ENCODE measurements at regions of chr2 and their contacts with region 1.

Region 1: GRCh38 chr2:24827321-24828237 is 34.4 kb downstream of the CENPO start:
- DNase-seq: peak; percentile 63 to 89
- ATAC-seq: peak; percentile 90 to 94 (median 92)
- H3K4me3 ChIP-seq: no peak overlapping the region
- H3K4me3 Mint-ChIP-seq: no peak overlapping the region
- H3K27ac ChIP-seq: no peak overlapping the region
- H3K27ac Mint-ChIP-seq: peak overlapping the region; percentile 48 to 66
- H3K4me1 ChIP-seq: peaks cover 15% of the 10 kb centered on the region
- H3K4me1 Mint-ChIP-seq: peaks cover 24% of the 10 kb centered on the region in 2 donors
- H3K27me3 ChIP-seq: no peaks in the 10 kb centered on the region
- H3K27me3 Mint-ChIP-seq: no peaks in the 10 kb centered on the region
- CTCF ChIP-seq: peak; percentile 93

Region 2: DNA sequence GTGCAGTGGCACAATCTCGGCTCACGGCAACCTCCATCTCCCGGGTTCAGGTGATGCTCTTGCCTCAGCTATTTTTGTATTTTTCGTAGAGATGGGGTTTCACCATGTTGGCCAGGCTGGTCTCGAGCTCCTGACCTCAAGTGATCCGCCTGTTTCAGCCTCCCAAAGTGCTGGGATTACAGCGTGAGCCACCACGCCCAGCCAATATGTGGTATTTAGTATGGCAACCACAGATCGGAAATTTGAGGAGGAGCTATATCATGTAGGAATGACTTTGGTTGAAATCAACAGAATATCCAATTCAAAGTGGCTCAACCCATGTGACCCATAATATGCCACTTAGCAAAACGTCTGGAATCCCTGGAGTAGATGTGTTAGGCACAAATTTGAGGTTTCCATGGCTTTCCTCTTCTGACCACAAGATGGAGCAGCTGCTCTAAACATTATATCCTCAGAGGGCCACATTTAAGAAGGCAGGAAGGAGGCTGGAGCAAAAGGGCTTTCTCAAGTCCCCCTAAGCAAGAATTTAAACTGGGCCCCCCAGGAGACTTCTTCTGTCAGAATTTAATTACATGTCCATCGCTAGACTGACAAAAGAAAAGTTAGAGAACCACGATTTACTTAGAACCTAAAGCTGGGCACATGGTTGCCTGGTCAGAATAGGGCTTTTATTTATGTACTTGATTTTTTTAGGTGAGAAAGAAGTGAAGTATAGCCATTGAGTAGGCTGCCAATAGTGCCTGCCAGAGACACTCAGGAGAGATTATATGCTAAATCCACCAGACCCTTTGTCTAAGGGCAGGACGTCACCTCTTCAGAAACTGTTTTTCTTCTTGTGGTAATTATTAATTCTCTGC is 417.7 kb before region 1 on chr2:
- intact Hi-C with region 1: loop called (anchors 1 kb)
- DNase-seq: peak in 1 of 2 donors; percentile 82
- ATAC-seq: peak; percentile 74 to 83 (median 79)
- H3K4me3 ChIP-seq: no peak overlapping the region
- H3K4me3 Mint-ChIP-seq: no peak overlapping the region
- H3K27ac ChIP-seq: no peak overlapping the region
- H3K27ac Mint-ChIP-seq: no peak overlapping the region
- H3K4me1 ChIP-seq: no peaks in the 10 kb centered on the region
- H3K4me1 Mint-ChIP-seq: no peaks in the 10 kb centered on the region
- H3K27me3 ChIP-seq: no peaks in the 10 kb centered on the region
- H3K27me3 Mint-ChIP-seq: peaks cover 0 to 4% of the 10 kb centered on the region in 2 donors
- CTCF ChIP-seq: peak; percentile 84

Region 3: DNA sequence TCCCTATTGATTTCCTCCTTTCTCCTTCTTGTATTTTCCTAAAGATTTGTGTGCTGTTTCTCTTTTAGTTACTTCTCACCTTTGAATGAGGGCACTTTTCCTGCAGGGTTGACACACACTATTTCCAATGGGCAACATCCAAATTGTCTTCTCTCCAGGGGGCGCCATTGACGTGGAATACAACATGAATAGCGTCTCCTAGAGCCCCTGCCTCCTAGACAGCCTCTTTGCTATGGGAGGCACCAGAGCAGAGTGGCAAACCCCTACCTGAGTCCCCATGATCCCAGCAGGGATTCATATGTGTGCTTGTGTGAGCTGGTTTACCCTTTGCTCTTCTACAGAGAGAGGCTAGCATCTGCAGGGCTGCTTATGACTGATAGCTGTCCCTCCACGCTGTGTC is 405.9 kb before region 1 on chr2:
- intact Hi-C with region 1: loop called (anchors 1 kb)
- DNase-seq: peak; percentile 38 to 71
- ATAC-seq: peak; percentile 47 to 77 (median 67)
- H3K4me3 ChIP-seq: no peak overlapping the region
- H3K4me3 Mint-ChIP-seq: no peak overlapping the region
- H3K27ac ChIP-seq: no peak overlapping the region
- H3K27ac Mint-ChIP-seq: no peak overlapping the region
- H3K4me1 ChIP-seq: no peaks in the 10 kb centered on the region
- H3K4me1 Mint-ChIP-seq: peaks cover 0 to 6% of the 10 kb centered on the region in 2 donors
- H3K27me3 ChIP-seq: no peaks in the 10 kb centered on the region
- H3K27me3 Mint-ChIP-seq: no peaks in the 10 kb centered on the region
- CTCF ChIP-seq: peak; percentile 51

Region 4: DNA sequence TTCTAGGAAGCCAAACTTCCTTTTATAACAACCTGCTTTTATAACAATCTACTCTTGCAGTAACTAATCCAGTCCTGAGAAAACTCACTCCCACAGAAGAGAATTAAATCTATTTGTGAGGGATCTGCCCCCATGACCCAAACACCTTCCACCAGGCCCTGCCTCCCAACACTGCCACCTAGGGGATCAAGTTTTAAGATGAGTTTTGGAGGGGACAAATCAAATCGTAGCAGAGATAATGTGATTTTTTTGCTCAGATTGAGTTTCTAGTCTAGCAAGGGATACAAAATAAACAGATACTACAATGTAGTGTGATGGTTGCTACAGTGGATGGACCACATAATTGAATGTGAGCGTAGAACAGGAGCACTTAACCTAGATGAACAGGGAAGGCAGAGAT is 284.3 kb before region 1 on chr2:
- intact Hi-C with region 1: loop called (anchors 5 kb)
- DNase-seq: peak in 1 of 2 donors; percentile 33
- ATAC-seq: peak; percentile 50 to 57 (median 51)
- H3K4me3 ChIP-seq: no peak overlapping the region
- H3K4me3 Mint-ChIP-seq: peak overlapping the region; percentile 0
- H3K27ac ChIP-seq: no peak overlapping the region
- H3K27ac Mint-ChIP-seq: peak overlapping the region; percentile 15 to 52
- H3K4me1 ChIP-seq: peaks cover 13% of the 10 kb centered on the region
- H3K4me1 Mint-ChIP-seq: peaks cover 65 to 75% of the 10 kb centered on the region in 2 donors
- H3K27me3 ChIP-seq: no peaks in the 10 kb centered on the region
- H3K27me3 Mint-ChIP-seq: no peaks in the 10 kb centered on the region
- CTCF ChIP-seq: peak; percentile 54

Region 5: DNA sequence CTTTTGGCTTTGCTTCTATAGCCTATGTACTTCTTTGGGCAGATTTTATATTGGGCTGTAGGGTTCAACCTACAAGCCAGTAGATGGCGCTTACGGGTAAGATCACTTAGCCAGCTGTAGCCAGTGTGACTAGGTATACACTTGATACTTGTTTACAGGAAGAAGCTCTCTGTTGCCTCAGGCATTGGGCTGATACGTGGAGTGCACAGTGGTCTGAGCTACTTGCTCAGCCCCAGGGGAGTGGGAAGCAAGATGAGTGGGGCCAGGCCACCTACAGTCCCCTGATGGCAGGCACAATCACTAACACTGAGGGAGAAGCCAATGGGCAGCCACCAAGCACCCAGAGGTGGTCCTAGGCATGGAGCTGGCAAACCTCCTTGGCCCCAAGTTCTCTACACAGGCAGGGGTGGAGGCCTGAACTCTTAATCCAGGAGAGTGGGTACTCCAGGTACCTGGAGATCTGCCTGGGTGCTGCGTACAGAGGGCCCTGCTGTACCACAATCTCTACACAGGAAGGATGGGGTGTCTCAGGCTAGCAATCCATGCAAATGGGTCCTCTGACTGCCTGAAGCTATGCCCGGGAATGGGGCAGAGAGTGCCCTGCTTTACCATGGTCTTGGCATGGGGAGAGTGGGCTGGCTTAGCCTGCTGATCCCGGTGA is 214.3 kb before region 1 on chr2:
- intact Hi-C with region 1: loop called (anchors 1 kb)
- DNase-seq: peak; percentile 51 to 67
- ATAC-seq: peak; percentile 95 to 97 (median 97)
- H3K4me3 ChIP-seq: no peak overlapping the region
- H3K4me3 Mint-ChIP-seq: peak overlapping the region; percentile 61
- H3K27ac ChIP-seq: peak overlapping the region; percentile 62
- H3K27ac Mint-ChIP-seq: peak overlapping the region; percentile 89 to 98
- H3K4me1 ChIP-seq: peaks cover 8% of the 10 kb centered on the region
- H3K4me1 Mint-ChIP-seq: peaks cover 45 to 55% of the 10 kb centered on the region in 2 donors
- H3K27me3 ChIP-seq: no peaks in the 10 kb centered on the region
- H3K27me3 Mint-ChIP-seq: no peaks in the 10 kb centered on the region
- CTCF ChIP-seq: peak; percentile 75

Measured in natural killer cell (primary cell).